ENCODE measurements at regions of chr5 and their contacts with region 1.

Region 1: DNA sequence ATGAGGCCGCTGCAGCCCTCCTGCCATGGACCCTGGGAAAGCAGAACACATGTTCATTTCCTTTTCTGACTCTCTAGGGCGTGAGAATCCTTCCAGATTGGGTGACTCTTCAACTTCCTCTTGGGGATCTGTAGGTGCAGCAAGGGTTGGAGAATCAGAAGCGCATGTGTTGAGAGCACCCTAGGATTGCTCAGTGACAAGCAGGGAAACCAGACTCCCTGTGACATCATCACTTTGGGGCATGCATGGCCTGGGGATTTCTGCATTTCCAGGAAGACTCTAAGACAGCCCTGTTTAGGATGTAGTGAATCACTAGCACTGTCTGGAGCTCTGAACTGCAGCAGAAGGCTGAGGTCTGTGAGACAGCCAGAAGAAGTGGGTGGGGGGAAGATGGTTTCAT is 15.1 kb upstream of the LCP2 start:
- DNase-seq: peak in 2 of 10 donors; percentile 45 to 71
- ATAC-seq: peak; percentile 75 to 77
- H3K4me3 Mint-ChIP-seq: peak overlapping the region; percentile 31 to 86 (median 80)
- H3K27ac Mint-ChIP-seq: peak overlapping the region; percentile 85 to 96 (median 92)
- H3K4me1 Mint-ChIP-seq: peaks cover 36 to 80% (median 65%) of the 10 kb centered on the region in 4 donors
- H3K27me3 Mint-ChIP-seq: no peaks in the 10 kb centered on the region

Region 2: GRCh38 chr5:170327168-170327567 is 14.5 kb after region 1 on chr5:
- POLR2A ChIA-PET with region 1: interaction called, 34 read pairs
- DNase-seq: no peak
- ATAC-seq: no peak
- H3K4me3 Mint-ChIP-seq: no peak overlapping the region
- H3K27ac Mint-ChIP-seq: no peak overlapping the region
- H3K4me1 Mint-ChIP-seq: peaks cover 12 to 15% (median 14%) of the 10 kb centered on the region in 4 donors
- H3K27me3 Mint-ChIP-seq: no peaks in the 10 kb centered on the region

Region 3: DNA sequence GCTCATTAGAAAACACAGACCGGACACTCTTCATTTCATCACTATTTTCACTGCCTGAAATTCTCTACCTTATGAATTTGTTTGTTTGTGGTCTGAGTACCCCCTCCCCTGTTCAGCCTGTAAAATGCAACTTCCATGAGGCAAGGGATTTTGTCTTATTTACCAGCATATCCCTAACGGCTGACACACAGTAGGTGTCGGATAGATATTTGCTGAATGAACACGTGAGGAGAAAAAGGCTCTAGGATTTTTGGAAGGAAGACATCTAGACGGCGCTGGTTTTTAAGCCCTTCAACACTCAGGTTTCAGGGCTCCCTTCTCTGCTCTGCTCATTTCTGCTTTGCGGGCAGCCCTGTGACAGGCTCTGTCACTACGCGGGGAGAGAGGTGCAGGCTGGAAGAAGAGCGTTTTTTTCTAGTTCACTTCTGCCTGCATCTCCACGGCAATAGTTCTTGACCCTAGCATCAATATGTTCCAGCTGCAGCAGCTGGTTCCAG is 35.5 kb after region 1 on chr5:
- POLR2A ChIA-PET with region 1: no interaction called
- DNase-seq: no peak
- ATAC-seq: peak in 1 of 2 donors; percentile 33
- H3K4me3 Mint-ChIP-seq: no peak overlapping the region
- H3K27ac Mint-ChIP-seq: no peak overlapping the region
- H3K4me1 Mint-ChIP-seq: peaks cover 0 to 8% (median 1%) of the 10 kb centered on the region in 4 donors
- H3K27me3 Mint-ChIP-seq: peaks cover 2 to 20% (median 6%) of the 10 kb centered on the region in 5 donors